CD8-positive, alpha-beta T cell (primary cell): ENCODE measurements at regions of chr22 and their contacts with region 1.

Region 1: DNA sequence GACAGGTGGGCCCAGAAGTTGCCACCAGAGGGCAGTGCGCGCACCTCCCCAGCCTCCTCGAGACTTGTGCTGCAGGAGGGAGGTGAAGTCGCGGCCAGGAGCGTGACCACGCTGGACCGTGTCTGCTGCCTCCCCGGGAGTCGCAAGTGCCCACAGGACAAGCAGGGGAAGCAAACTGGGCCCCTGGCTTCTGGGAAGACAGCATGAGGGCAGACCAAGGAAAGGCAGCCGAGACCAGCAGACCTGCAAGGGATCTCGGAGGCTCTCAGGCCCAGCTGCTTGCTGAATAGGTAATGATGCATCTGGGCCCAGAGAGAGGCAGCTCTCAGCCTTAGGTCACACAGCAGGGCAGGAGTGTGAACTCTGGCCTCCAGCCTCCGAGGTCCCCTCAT is 17.0 kb upstream of the IL2RB start:
- DNase-seq: peak; percentile 73 to 92 (median 86)
- ATAC-seq: peak; percentile 43
- H3K4me3 ChIP-seq: peak overlapping the region; percentile 42 to 60
- H3K4me3 Mint-ChIP-seq: peak overlapping the region; percentile 91
- H3K27ac ChIP-seq: peak overlapping the region; percentile 49 to 75
- H3K27ac Mint-ChIP-seq: peak overlapping the region; percentile 94
- H3K4me1 ChIP-seq: peaks cover 88% of the 10 kb centered on the region
- H3K4me1 Mint-ChIP-seq: peaks cover 96% of the 10 kb centered on the region
- H3K27me3 ChIP-seq: no peaks in the 10 kb centered on the region
- H3K27me3 Mint-ChIP-seq: no peaks in the 10 kb centered on the region
- CTCF ChIP-seq: peak; percentile 91

Region 2: GRCh38 chr22:37121887-37122591 is 44.6 kb before region 1 on chr22:
- CTCF ChIA-PET with region 1: interaction called, 18 read pairs
- POLR2A ChIA-PET with region 1: interaction called, 4 read pairs
- intact Hi-C with region 1: loop called (anchors 1 to 5 kb)
- DNase-seq: peak; percentile 81 to 99 (median 89)
- ATAC-seq: peak; percentile 95
- H3K4me3 ChIP-seq: peak overlapping the region; percentile 18 to 34
- H3K4me3 Mint-ChIP-seq: peak overlapping the region; percentile 71
- H3K27ac ChIP-seq: peak overlapping the region; percentile 93 to 98
- H3K27ac Mint-ChIP-seq: peak overlapping the region; percentile 99
- H3K4me1 ChIP-seq: peaks cover 36% of the 10 kb centered on the region
- H3K4me1 Mint-ChIP-seq: peaks cover 55% of the 10 kb centered on the region
- H3K27me3 ChIP-seq: no peaks in the 10 kb centered on the region
- H3K27me3 Mint-ChIP-seq: no peaks in the 10 kb centered on the region
- CTCF ChIP-seq: no peak

Region 3: GRCh38 chr22:37186228-37186996 is 19.7 kb after region 1 on chr22:
- CTCF ChIA-PET with region 1: interaction called, 32 read pairs
- POLR2A ChIA-PET with region 1: interaction called, 4 read pairs
- intact Hi-C with region 1: no loop called
- DNase-seq: peak in 7 of 9 experiments; percentile 41 to 93 (median 60)
- ATAC-seq: peak; percentile 89
- H3K4me3 ChIP-seq: peak overlapping the region; percentile 13 to 16
- H3K4me3 Mint-ChIP-seq: peak overlapping the region; percentile 72
- H3K27ac ChIP-seq: peak overlapping the region; percentile 38 to 47
- H3K27ac Mint-ChIP-seq: peak overlapping the region; percentile 80
- H3K4me1 ChIP-seq: peaks cover 65% of the 10 kb centered on the region
- H3K4me1 Mint-ChIP-seq: peaks cover 60% of the 10 kb centered on the region
- H3K27me3 ChIP-seq: no peaks in the 10 kb centered on the region
- H3K27me3 Mint-ChIP-seq: no peaks in the 10 kb centered on the region
- CTCF ChIP-seq: no peak

Region 4: GRCh38 chr22:37229805-37230672 is 63.4 kb after region 1 on chr22:
- CTCF ChIA-PET with region 1: interaction called, 14 read pairs
- POLR2A ChIA-PET with region 1: interaction called, 5 read pairs
- intact Hi-C with region 1: no loop called
- DNase-seq: peak; percentile 80 to 97 (median 91)
- ATAC-seq: peak; percentile 68
- H3K4me3 ChIP-seq: peak overlapping the region; percentile 36 to 52
- H3K4me3 Mint-ChIP-seq: peak overlapping the region; percentile 80
- H3K27ac ChIP-seq: peak overlapping the region; percentile 75 to 92
- H3K27ac Mint-ChIP-seq: peak overlapping the region; percentile 100
- H3K4me1 ChIP-seq: peaks cover 94% of the 10 kb centered on the region
- H3K4me1 Mint-ChIP-seq: peaks cover 91% of the 10 kb centered on the region
- H3K27me3 ChIP-seq: no peaks in the 10 kb centered on the region
- H3K27me3 Mint-ChIP-seq: no peaks in the 10 kb centered on the region
- CTCF ChIP-seq: no peak